Aorta (tissue), 5 donors: ENCODE measurements at regions of chr22 and their contacts with region 1.

Region 1: GRCh38 chr22:29031227-29032011 is 30.2 kb downstream of the C22orf31 start:
- DNase-seq: peak; percentile 83 to 86
- ATAC-seq: peak; percentile 92
- H3K4me3 ChIP-seq: no peak overlapping the region
- H3K27ac ChIP-seq: peak overlapping the region; percentile 89 to 93
- H3K4me1 ChIP-seq: peaks cover 0 to 4% of the 10 kb centered on the region in 2 donors
- H3K27me3 ChIP-seq: no peaks in the 10 kb centered on the region

Region 2: GRCh38 chr22:28882878-28883656 is 148.4 kb before region 1 on chr22 and contains the start of gene ZNRF3:
- intact Hi-C with region 1: loop called (anchors 2 to 10 kb)
- DNase-seq: peak; percentile 93 to 97
- ATAC-seq: peak; percentile 99
- H3K4me3 ChIP-seq: peak within 1 kb of the TSS; percentile 77 to 85
- H3K27ac ChIP-seq: peak within 1 kb of the TSS; percentile 39
- H3K4me1 ChIP-seq: no peaks in the 10 kb centered on the region
- H3K27me3 ChIP-seq: no peaks in the 10 kb centered on the region
- total RNA-seq, gene ZNRF3: 7.2 to 11.8 TPM

Region 3: GRCh38 chr22:28911777-28912669 is 119.4 kb before region 1 on chr22:
- intact Hi-C with region 1: loop called in 1 of 2 experiments (anchors 5 kb)
- DNase-seq: peak in 1 of 2 donors; percentile 9
- ATAC-seq: peak; percentile 73
- H3K4me3 ChIP-seq: no peak overlapping the region
- H3K27ac ChIP-seq: peak overlapping the region; percentile 97 to 100
- H3K4me1 ChIP-seq: peaks cover 13 to 14% of the 10 kb centered on the region in 2 donors
- H3K27me3 ChIP-seq: no peaks in the 10 kb centered on the region

Region 4: GRCh38 chr22:28976588-28976987 is 54.8 kb before region 1 on chr22:
- intact Hi-C with region 1: loop called in 1 of 2 experiments (anchors 5 kb)
- DNase-seq: no peak
- ATAC-seq: no peak
- H3K4me3 ChIP-seq: no peak overlapping the region
- H3K27ac ChIP-seq: peak overlapping the region in 1 of 2 donors; percentile 38
- H3K4me1 ChIP-seq: peaks cover 2 to 9% of the 10 kb centered on the region in 2 donors
- H3K27me3 ChIP-seq: no peaks in the 10 kb centered on the region

Region 5: DNA sequence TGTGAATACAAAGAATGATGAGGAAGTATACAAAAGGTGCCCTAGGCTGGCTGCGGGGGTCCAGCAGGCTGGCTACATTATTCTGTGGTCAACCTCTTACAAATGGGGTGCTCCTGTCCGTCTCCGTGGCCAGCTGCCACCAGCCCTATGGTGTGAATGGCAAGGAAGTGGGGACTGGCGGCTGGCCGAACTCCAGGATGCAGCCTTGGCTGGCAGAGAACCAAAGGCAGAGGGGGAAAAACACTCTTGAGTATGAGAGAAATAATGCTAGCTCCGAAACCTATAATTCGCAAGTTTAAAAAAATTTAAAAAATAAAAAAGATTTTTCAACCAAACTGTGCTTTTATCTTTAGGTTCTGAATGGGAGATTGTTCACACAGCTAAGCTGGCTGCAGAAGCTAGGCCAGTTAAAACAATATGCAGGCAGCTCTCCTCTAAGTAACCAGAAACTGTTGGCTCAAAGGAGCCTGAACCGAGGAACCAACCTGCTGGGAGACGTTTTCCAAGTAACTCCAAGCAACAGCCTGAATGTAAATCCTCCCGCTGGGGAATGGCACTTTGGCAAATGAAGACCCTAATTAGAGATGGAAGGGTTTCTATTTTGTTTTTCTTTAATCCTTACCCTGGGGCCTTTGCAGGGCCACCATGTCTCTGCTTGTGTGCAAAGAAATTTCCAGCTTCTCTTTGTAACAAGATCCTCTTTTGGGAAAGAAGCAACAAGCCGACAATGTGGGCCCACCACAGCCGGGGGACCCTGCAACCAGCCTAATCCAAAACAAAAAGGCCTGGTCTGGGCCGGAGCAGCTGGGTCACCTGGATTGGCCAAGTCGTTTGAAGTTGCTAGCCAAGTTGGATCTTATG is 19.9 kb before region 1 on chr22:
- intact Hi-C with region 1: no loop called
- DNase-seq: no peak
- ATAC-seq: no peak
- H3K4me3 ChIP-seq: no peak overlapping the region
- H3K27ac ChIP-seq: no peak overlapping the region
- H3K4me1 ChIP-seq: peaks cover 2 to 7% of the 10 kb centered on the region in 2 donors
- H3K27me3 ChIP-seq: no peaks in the 10 kb centered on the region